ENCODE measurements at regions of chr2 and their contacts with region 1.

Region 1: DNA sequence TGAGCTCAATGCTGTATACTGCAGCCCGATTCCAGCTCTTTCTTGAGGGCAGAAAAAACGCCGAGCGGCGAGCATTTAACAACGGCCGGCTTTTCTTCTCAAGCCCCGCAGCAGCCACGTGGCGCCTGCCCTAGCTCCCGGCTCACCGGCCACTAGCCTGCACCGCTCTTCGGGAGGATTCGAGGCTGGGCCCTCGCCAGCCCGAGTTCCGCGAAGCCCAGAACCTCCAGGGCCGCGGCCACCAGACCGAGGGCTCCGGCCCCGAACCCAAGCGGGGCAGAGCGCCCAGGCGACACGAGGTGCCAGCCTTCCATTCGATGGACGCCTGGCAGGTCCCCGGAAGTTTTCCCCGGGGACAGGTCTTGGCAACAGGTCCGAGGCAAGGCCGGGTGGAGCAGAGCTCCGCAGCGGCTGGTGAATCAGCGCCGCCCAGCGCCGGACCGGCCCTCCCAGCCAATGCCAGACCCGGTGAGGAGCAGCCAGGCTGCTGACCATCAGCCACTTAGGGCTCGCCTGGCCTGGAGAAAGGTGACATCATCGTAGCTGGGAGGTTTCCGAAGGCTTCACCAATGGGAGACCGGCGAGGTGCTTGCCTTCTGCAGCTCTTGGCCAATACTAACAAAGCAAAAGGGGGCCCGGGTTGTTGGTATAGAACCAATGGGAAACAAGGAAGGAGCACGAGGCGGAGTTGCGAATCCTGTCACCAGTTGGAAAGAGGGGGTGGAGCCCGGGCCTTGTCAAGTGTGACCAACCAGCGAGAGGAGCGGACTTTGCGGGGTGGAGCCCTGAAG is 544 bp upstream of the MXD1 start:
- DNase-seq: peak; percentile 100
- H3K4me3 ChIP-seq: peak overlapping the region; percentile 73
- H3K27ac ChIP-seq: peak overlapping the region; percentile 95
- H3K27me3 ChIP-seq: no peaks in the 10 kb centered on the region
- CTCF ChIP-seq: no peak; the same call in 1 of the 2 replicates

Region 2: GRCh38 chr2:69933839-69934613 is 19.7 kb after region 1 on chr2:
- CTCF ChIA-PET with region 1: interaction called, 8 read pairs
- POLR2A ChIA-PET with region 1: interaction called, 10 read pairs
- DNase-seq: peak; percentile 47
- H3K4me3 ChIP-seq: peak overlapping the region; percentile 34
- H3K27ac ChIP-seq: peak overlapping the region; percentile 88
- H3K27me3 ChIP-seq: no peaks in the 10 kb centered on the region
- CTCF ChIP-seq: no peak

Region 3: GRCh38 chr2:69969126-69969963 is 55.0 kb after region 1 on chr2:
- CTCF ChIA-PET with region 1: no interaction called
- POLR2A ChIA-PET with region 1: no interaction called
- DNase-seq: no peak
- H3K4me3 ChIP-seq: no peak overlapping the region
- H3K27ac ChIP-seq: no peak overlapping the region
- H3K27me3 ChIP-seq: peaks cover 4% of the 10 kb centered on the region
- CTCF ChIP-seq: no peak

Region 4: DNA sequence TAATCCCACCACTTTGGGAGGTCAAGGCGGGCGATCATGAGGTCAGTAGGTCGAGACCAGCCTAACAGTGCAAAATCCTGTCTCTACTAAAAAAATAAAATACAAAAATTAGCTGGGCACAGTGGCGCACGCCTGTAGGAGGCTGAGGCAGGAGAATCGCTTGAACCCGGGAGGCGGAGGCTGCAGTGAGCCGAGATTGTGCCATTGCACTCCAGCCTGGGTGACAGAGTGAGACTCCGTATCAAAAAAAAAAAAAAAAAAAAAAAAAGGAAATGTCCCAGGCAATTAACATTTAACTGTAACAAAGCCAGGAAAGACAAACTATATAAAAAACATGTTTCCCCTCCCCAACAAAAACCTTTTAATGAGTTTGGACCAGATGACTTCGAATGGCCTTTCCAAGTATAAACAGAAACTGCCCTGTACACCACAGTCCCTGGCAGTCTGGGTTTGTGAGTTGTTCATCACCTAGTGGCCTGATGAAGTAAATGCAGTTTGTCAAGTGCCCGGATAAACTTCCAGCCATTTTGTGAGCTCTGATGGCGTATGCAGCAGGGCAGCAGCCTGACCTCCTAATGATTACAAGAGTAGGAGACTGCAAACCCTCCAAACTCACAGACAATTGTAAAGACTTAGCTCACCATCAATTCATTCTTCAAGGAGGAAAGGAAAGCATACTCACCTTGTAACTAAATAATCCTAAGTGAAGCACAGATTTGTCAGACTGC is 156.3 kb after region 1 on chr2:
- CTCF ChIA-PET with region 1: interaction called, 114 read pairs
- POLR2A ChIA-PET with region 1: interaction called, 27 read pairs
- DNase-seq: peak; percentile 77
- H3K4me3 ChIP-seq: no peak overlapping the region
- H3K27ac ChIP-seq: peak overlapping the region; percentile 42
- H3K27me3 ChIP-seq: no peaks in the 10 kb centered on the region
- CTCF ChIP-seq: peak; percentile 97

Region 5: GRCh38 chr2:70086838-70087701 is 172.7 kb after region 1 on chr2 and contains the start of gene PCBP1:
- CTCF ChIA-PET with region 1: interaction called, 13 read pairs
- POLR2A ChIA-PET with region 1: interaction called, 23 read pairs
- DNase-seq: peak; percentile 85
- H3K4me3 ChIP-seq: peak within 1 kb of the TSS; percentile 97
- H3K27ac ChIP-seq: peak within 1 kb of the TSS; percentile 100
- H3K27me3 ChIP-seq: no peaks in the 10 kb centered on the region
- CTCF ChIP-seq: no peak
- polyA plus RNA-seq, gene PCBP1: 63.8 and 91.3 TPM in 2 replicates

Region 6: GRCh38 chr2:70124983-70125480 is 210.7 kb after region 1 on chr2:
- CTCF ChIA-PET with region 1: interaction called, 3 read pairs
- POLR2A ChIA-PET with region 1: interaction called, 19 read pairs
- DNase-seq: no peak
- H3K4me3 ChIP-seq: peak overlapping the region; percentile 54
- H3K27ac ChIP-seq: peak overlapping the region; percentile 91
- H3K27me3 ChIP-seq: no peaks in the 10 kb centered on the region
- CTCF ChIP-seq: no peak

Region 7: GRCh38 chr2:70142590-70143313 is 228.4 kb after region 1 on chr2:
- CTCF ChIA-PET with region 1: interaction called, 34 read pairs
- POLR2A ChIA-PET with region 1: interaction called, 22 read pairs
- DNase-seq: peak; percentile 99
- H3K4me3 ChIP-seq: peak overlapping the region; percentile 59
- H3K27ac ChIP-seq: peak overlapping the region; percentile 82
- H3K27me3 ChIP-seq: no peaks in the 10 kb centered on the region
- CTCF ChIP-seq: peak; percentile 88

Region 8: DNA sequence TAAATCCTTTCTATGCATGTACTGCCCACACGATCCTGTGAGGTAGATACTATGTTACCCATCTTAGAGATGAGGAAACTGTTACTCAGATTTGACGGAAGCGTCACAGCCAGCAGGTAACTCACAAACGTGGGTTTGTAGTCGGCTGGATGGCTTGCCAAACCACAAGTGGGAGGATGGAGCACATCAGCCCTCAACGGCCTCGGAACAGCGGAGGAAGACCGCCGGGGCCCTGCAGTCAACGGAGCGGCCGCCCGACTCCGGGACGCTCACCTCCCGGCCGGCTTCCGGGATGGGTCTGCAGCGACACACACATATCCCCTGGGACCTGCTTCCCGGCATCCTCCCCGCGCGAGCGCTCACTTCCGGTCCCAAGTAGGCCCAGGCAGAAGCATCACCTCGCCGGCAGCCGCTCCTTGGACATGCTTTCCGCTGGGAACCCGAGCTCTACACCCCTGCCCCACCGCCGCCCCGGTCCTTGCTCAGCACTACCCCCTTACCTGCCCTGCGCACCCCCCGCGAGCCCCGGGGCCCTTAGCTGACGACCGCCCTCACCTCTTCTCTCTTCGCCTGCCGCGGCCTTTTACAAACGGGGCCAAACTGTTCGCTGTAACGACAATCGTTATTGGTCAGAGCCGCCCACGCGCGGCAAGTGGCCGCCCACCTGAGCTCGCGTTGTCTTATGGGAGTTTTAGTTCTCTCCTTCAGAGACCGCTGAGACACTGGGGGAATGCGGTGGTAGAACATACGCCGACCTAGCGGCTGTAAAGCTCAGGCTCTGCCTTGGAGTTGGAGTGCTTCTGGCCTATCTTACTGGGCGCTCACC is 276.3 kb after region 1 on chr2 and contains the start of gene C2orf42:
- CTCF ChIA-PET with region 1: interaction called, 3 read pairs
- POLR2A ChIA-PET with region 1: interaction called, 11 read pairs
- DNase-seq: peak; percentile 94
- H3K4me3 ChIP-seq: peak within 1 kb of the TSS; percentile 91
- H3K27ac ChIP-seq: peak within 1 kb of the TSS; percentile 94
- H3K27me3 ChIP-seq: no peaks in the 10 kb centered on the region
- CTCF ChIP-seq: 0 out of 2 replicates have a peak, but pooled peaks have one; percentile 22
- polyA plus RNA-seq, gene C2orf42: 9.8 and 10.7 TPM in 2 replicates

Region 9: GRCh38 chr2:70367722-70368323 is 453.5 kb after region 1 on chr2:
- CTCF ChIA-PET with region 1: no interaction called
- POLR2A ChIA-PET with region 1: no interaction called
- DNase-seq: no peak
- H3K4me3 ChIP-seq: no peak overlapping the region
- H3K27ac ChIP-seq: no peak overlapping the region
- H3K27me3 ChIP-seq: peaks cover 5% of the 10 kb centered on the region
- CTCF ChIP-seq: no peak

Measured in AG04450 (cell line).